Activated naive CD4-positive, alpha-beta T cell treated with anti-CD3 and anti-CD28 coated beads for 36 hours (primary cell): ENCODE measurements at regions of chr3 and their contacts with region 1.

Region 1: DNA sequence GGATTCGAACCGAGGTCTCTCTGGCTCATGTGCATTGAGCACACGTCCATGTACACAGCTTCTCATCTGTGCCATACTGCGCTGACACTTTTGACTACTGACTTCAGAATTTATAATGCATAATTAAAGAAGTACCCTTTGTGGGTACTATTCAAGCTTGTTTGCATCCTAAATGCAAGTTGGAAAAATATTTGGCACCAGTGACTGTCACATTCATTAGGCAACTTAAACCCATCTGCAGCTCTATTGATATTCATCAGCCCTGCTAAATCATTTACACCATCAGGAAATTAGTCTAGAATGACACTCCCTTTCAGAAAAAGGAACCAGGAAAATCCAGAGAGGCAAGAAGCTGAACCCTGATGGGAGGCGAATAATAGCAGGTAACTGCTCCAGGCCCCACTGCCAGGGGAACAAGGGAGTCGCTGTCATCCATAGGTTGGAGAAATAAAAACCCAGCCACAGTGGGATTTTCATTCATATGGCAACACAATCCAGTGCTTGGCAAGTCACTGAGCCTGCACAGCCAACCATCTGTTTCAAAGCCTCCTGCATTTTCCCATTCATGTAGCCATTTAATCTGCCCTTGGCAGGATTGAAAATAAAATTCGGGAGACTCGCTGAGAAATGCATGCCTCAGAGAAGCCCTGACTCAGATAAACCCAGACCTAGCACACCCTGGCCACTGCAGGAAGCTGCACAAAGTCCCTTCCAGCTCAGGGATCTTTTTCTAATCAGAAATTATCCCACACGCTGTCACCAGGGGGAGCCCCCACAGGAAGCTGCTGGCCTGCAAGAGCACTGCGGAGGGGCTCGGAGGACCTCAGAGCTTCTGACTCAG is 103.0 kb upstream of the VEPH1 start:
- DNase-seq: peak; percentile 77
- H3K4me3 Mint-ChIP-seq: no peak overlapping the region
- H3K27ac Mint-ChIP-seq: no peak overlapping the region
- H3K4me1 Mint-ChIP-seq: peaks cover 7% of the 10 kb centered on the region
- H3K27me3 Mint-ChIP-seq: peaks cover 5% of the 10 kb centered on the region

Region 2: DNA sequence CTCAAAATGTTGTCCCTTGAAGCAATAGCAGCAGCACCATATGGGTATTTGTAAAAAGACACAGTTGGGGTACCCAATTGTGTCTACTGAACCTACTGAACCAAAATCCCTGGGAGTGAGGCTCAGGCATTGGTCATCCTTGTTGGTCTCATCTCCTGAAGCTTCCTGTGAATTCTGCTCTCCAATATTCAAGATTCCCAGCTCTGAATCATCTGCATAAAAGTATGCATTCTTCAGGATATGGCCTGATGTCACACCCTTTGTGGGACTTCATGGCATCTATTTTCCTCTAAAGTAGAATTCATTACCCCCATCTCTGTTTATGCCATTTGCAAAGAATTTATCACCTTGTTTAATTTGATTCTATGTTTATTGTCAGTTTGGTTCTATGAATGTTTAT is 182.9 kb before region 1 on chr3:
- CTCF ChIA-PET with region 1: no interaction called
- intact Hi-C with region 1: no loop called
- DNase-seq: no peak
- H3K4me3 Mint-ChIP-seq: no peak overlapping the region
- H3K27ac Mint-ChIP-seq: no peak overlapping the region
- H3K4me1 Mint-ChIP-seq: no peaks in the 10 kb centered on the region
- H3K27me3 Mint-ChIP-seq: peaks cover 8% of the 10 kb centered on the region

Region 3: GRCh38 chr3:157594413-157594812 is 11.8 kb before region 1 on chr3:
- CTCF ChIA-PET with region 1: interaction called, 16 read pairs
- intact Hi-C with region 1: no loop called
- DNase-seq: no peak
- H3K4me3 Mint-ChIP-seq: no peak overlapping the region
- H3K27ac Mint-ChIP-seq: no peak overlapping the region
- H3K4me1 Mint-ChIP-seq: no peaks in the 10 kb centered on the region
- H3K27me3 Mint-ChIP-seq: peaks cover 10% of the 10 kb centered on the region